Activated T-helper 1 cell treated with anti-CD3 and anti-CD28 coated beads, Interleukin-12 subunit alpha, Interleukin-12 subunit beta, Interleukin-2, Interleukin-4 antibody, amounts not matched to agents 30 ng/mL and 10 ng/mL and 1 ng/mL, durations not matched to agents 14 hours and 24 hours and 36 hours (primary cell): ENCODE measurements at regions of chr12 and their contacts with region 1.

Region 1: DNA sequence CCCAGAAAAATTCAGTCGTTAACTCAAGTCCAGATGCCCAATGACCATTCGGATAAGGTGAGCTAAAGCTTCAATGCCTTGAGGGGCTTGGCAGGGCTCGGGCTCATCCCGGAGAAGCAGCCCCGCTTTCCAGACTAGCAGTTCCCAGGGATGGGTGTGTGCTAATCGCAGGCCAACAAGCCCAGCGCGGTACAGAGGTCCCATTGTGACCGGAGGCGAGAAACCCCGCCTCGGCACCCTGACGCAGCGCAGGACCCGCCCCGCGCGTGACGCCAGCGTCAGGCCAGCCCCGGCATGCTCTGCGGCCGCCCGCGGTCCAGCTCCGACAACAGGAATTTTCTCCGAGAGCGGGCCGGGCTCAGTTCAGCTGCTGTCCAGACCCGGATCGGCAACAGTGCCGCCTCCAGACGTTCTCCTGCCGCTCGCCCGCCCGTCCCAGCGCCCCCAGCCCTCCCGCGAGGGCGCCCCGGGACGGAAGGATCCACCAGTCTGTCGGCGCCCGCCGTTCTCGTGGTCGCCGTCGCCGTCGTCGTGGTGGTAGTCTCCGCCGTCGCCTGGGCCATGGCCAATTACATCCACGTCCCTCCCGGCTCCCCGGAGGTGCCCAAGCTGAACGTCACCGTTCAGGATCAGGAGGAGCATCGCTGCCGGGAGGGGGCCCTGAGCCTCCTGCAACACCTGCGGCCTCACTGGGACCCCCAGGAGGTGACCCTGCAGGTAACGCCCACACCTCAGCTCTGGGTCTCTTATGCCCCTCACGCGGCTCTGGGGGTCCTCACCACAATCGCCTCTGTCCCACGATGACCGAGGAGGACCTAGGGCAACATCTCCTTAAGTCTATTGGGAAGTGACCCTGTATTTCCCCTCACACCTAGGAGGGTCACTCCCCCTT is at the start of gene ETNK1:
- DNase-seq: peak; percentile 83
- H3K4me3 Mint-ChIP-seq: peak within 1 kb of the TSS; percentile 93
- H3K27ac Mint-ChIP-seq: peak within 1 kb of the TSS; percentile 87
- H3K4me1 Mint-ChIP-seq: peaks cover 44% of the 10 kb centered on the region
- H3K27me3 Mint-ChIP-seq: peaks cover 13% of the 10 kb centered on the region
- total RNA-seq, gene ETNK1: 106 and 111 TPM in 2 replicates

Region 2: DNA sequence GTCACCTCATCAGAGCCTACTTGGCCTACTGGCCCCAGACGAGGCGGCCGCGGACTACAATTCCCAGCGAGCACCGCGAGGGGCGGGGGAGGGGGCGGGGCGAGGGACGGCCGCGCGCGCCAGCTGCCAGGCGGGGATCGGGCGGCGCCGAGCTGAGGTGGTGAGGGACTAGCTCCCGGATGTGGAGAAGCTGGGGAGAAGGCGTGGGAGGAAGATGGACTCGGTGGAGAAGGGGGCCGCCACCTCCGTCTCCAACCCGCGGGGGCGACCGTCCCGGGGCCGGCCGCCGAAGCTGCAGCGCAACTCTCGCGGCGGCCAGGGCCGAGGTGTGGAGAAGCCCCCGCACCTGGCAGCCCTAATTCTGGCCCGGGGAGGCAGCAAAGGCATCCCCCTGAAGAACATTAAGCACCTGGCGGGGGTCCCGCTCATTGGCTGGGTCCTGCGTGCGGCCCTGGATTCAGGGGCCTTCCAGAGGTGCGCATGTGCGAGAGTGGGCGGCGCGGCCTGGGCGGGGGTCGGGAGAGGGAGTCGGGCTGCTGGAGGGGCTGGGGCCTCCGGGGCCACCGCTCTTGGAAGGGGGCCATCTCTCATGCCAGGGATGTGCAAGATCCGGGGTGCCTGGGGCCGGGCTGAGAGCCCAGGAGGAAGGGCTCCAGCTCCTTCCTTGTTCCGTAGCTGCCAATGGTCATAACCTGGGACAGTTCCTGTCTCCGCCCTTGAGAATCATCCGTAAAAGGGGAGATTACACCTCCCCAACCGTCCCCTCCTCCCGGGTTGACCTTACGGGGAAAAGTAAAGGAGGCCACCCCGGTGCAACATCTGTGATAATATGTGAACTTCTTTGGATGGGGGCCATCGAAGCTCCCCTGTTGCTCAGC is 578.8 kb before region 1 on chr12 and contains the start of gene CMAS:
- intact Hi-C with region 1: loop called (anchors 2 kb)
- DNase-seq: peak; percentile 70
- H3K4me3 Mint-ChIP-seq: peak within 1 kb of the TSS; percentile 95
- H3K27ac Mint-ChIP-seq: peak within 1 kb of the TSS; percentile 88
- H3K4me1 Mint-ChIP-seq: peaks cover 48% of the 10 kb centered on the region
- H3K27me3 Mint-ChIP-seq: no peaks in the 10 kb centered on the region
- total RNA-seq, gene CMAS: 34.1 and 34.9 TPM in 2 replicates

Region 3: GRCh38 chr12:22409377-22410164 is 215.5 kb before region 1 on chr12:
- intact Hi-C with region 1: loop called (anchors 2 kb)
- DNase-seq: peak; percentile 52
- H3K4me3 Mint-ChIP-seq: peak overlapping the region; percentile 6
- H3K27ac Mint-ChIP-seq: peak overlapping the region; percentile 54
- H3K4me1 Mint-ChIP-seq: peaks cover 31% of the 10 kb centered on the region
- H3K27me3 Mint-ChIP-seq: no peaks in the 10 kb centered on the region

Region 4: GRCh38 chr12:22473212-22473611 is 151.9 kb before region 1 on chr12:
- intact Hi-C with region 1: loop called (anchors 5 kb)
- DNase-seq: no peak
- H3K4me3 Mint-ChIP-seq: no peak overlapping the region
- H3K27ac Mint-ChIP-seq: peak overlapping the region; percentile 2
- H3K4me1 Mint-ChIP-seq: peaks cover 19% of the 10 kb centered on the region
- H3K27me3 Mint-ChIP-seq: no peaks in the 10 kb centered on the region

Region 5: GRCh38 chr12:22544038-22544979 is 80.8 kb before region 1 on chr12 and contains the start of gene C2CD5:
- intact Hi-C with region 1: loop called (anchors 1 kb)
- DNase-seq: peak; percentile 92
- H3K4me3 Mint-ChIP-seq: peak within 1 kb of the TSS; percentile 94
- H3K27ac Mint-ChIP-seq: peak within 1 kb of the TSS; percentile 96
- H3K4me1 Mint-ChIP-seq: peaks cover 35% of the 10 kb centered on the region
- H3K27me3 Mint-ChIP-seq: peaks cover 14% of the 10 kb centered on the region
- total RNA-seq, gene C2CD5: 30.0 and 35.5 TPM in 2 replicates

Region 6: DNA sequence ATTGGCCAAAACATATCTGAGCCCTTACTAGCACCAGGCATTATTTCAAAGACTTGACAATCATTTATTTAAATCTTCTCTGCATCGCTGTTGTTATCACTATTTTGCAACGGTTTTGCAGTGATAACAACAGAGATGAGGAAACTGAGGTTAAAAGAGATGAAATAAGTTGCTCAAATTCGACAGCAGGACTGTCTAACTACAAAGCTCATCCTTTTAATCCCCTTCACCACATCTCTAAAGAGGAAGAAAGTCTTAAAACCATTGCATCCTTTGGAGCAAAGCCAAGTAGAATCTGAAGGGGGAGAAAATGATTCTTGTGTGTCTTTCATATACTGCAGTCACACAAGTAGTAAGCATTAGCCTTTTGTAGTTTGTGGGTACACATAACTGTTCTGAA is 15.0 kb before region 1 on chr12:
- intact Hi-C with region 1: loop called (anchors 1 kb)
- DNase-seq: no peak
- H3K4me3 Mint-ChIP-seq: no peak overlapping the region
- H3K27ac Mint-ChIP-seq: no peak overlapping the region
- H3K4me1 Mint-ChIP-seq: no peaks in the 10 kb centered on the region
- H3K27me3 Mint-ChIP-seq: peaks cover 7% of the 10 kb centered on the region

Region 7: DNA sequence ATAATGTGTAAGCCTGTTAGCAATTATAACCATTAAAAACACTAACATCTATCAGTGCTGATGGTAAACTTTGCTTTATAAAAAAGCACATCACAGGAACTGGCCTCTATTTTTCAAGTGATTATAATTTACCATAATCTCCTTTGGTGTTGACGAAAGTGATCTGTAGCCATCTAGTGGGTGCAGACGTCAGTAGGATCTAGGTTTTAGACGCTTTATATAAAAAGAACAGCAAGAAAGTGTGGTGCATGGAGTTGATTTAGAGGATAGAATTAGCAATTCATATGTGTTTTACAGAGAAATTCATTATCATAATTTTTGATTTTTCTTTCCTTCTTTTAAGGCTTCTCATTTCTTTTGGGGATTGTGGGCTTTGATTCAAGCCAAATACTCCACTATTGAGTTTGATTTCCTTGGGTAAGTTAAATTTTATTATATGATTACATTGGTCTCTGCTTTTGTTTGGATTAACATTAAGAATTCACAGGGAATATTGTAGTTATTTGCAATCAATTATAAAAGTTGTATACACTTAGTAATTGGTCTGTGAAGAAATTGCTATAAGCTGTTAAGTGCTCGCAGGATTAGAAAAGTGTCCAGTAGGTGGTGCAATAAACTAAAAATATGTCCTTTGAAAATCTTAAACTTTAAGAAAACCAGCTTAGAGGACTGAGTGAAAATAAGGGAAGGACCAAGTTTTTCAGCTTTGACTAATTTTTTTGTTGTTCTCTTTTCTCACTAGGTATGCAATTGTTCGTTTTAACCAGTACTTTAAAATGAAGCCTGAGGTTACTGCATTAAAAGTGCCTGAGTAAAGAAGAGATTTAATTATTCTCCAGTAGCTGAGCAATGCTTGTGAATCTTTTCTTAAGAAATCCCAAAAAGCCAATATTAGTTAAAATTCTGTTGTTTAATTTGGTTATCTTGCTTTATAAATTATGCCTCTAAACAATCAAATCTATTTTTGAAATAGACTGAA is 59.3 kb after region 1 on chr12:
- intact Hi-C with region 1: loop called (anchors 2 kb)
- DNase-seq: no peak
- H3K4me3 Mint-ChIP-seq: no peak overlapping the region
- H3K27ac Mint-ChIP-seq: no peak overlapping the region
- H3K4me1 Mint-ChIP-seq: peaks cover 24% of the 10 kb centered on the region
- H3K27me3 Mint-ChIP-seq: no peaks in the 10 kb centered on the region

Region 8: DNA sequence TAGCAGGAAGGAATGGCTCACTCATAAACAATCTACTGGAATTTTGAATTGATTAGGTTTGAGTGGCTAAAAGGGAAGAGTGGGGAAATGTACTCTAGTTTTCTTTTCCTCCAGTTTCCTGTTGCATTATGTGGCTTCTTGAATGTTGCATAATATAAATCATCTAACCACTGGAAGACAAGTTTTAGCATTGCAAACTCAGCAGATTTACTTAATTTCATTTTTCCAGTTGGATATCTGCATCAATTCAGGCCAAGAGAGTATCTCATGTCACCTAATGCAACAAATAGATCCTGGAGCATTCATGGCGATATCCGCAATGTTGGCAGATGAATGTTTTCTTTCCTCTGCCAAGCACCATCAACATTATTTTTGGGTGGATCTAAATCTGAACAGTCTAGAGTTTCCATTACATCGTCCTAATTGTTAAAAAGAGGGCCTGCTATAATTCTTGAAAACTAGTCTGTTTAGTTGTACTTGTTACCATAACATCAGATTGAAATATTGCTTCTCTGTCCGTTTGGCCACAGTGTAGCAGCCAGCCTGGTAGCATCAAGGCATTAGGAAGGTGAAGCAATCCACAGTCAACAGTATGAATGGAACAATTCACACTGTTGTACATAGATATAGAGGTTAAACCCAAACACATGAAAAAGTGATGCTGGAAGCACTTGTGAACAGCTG is 544.0 kb after region 1 on chr12:
- intact Hi-C with region 1: no loop called
- DNase-seq: no peak
- H3K4me3 Mint-ChIP-seq: no peak overlapping the region
- H3K27ac Mint-ChIP-seq: no peak overlapping the region
- H3K4me1 Mint-ChIP-seq: no peaks in the 10 kb centered on the region
- H3K27me3 Mint-ChIP-seq: no peaks in the 10 kb centered on the region